ENCODE measurements at regions of chr9 and their contacts with region 1.

Region 1: GRCh38 chr9:104927912-104928740 is at the start of gene ABCA1:
- DNase-seq: peak; percentile 92
- H3K4me3 ChIP-seq: peak within 1 kb of the TSS; percentile 58 to 66
- H3K27ac ChIP-seq: peak within 1 kb of the TSS; percentile 66 to 68
- H3K4me1 ChIP-seq: no peaks in the 10 kb centered on the region
- H3K27me3 ChIP-seq: no peaks in the 10 kb centered on the region
- CTCF ChIP-seq: no peak
- POLR2A ChIP-seq: peak; percentile 80
- total RNA-seq, gene ABCA1: 11.0 to 63.7 TPM

Region 2: GRCh38 chr9:104836235-104836634 is 91.9 kb before region 1 on chr9:
- intact Hi-C with region 1: no loop called
- DNase-seq: no peak
- H3K4me3 ChIP-seq: no peak overlapping the region
- H3K27ac ChIP-seq: no peak overlapping the region
- H3K4me1 ChIP-seq: no peaks in the 10 kb centered on the region
- H3K27me3 ChIP-seq: no peaks in the 10 kb centered on the region
- CTCF ChIP-seq: no peak
- POLR2A ChIP-seq: no peak

Region 3: DNA sequence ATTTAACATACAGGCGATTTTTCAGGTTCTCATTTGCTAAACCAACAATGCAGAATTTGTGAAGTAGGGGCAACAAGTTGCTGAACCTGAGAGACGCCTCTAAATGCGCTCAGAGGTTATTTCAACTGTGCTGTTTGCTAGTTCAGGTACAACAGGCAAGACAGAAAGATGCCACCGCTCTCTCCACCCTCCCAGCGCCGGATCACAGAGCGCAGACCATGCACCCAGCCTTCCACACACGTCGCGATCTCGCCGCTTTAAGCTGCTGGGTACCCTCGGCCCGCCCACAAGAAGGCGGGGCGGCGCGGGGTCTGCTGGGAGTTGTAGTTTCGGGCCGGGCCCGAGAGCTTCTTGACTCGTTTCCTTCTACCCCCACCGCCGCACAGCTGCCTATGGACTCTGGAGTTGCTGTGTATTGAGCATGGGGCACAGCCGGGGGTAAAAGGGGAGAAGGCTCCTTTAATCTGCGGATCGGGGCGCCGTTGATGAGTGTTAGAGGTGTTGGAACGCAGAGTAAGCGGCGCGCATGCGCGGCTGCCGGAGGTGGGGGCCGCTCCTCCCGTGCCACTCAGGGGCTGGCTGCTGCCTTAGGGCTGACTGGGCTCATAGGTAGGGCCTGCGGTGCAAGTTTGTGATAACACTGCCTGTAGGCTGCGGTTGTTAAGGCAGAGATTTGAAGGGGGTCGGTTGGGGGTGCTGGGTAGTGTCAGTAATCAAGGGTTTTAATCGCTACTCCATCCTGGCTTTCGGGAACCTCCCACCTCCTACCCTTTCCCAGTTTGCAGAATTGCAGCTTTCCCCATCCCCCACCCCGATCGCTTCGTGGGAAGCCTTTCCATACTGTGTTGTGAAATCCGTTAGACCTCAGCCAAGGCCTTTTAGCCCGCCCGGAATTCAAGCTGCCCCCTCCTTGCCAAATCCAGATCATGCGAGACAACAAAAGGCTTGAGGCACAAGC is 40.2 kb after region 1 on chr9:
- intact Hi-C with region 1: loop called (anchors 1 kb)
- DNase-seq: peak; percentile 80
- H3K4me3 ChIP-seq: peak overlapping the region; percentile 45 to 51
- H3K27ac ChIP-seq: peak overlapping the region; percentile 76 to 81
- H3K4me1 ChIP-seq: no peaks in the 10 kb centered on the region
- H3K27me3 ChIP-seq: no peaks in the 10 kb centered on the region
- CTCF ChIP-seq: peak in 1 of 4 experiments; percentile 1
- POLR2A ChIP-seq: no peak

Region 4: GRCh38 chr9:105064315-105065097 is 136.4 kb after region 1 on chr9:
- intact Hi-C with region 1: loop called (anchors 10 kb)
- DNase-seq: peak; percentile 91
- H3K4me3 ChIP-seq: no peak overlapping the region
- H3K27ac ChIP-seq: peak overlapping the region; percentile 50 to 70
- H3K4me1 ChIP-seq: no peaks in the 10 kb centered on the region
- H3K27me3 ChIP-seq: no peaks in the 10 kb centered on the region
- CTCF ChIP-seq: peak in 1 of 4 experiments; percentile 16
- POLR2A ChIP-seq: peak; percentile 9

Region 5: GRCh38 chr9:105244003-105244733 is 316.0 kb after region 1 on chr9 and contains the start of gene SLC44A1:
- intact Hi-C with region 1: loop called (anchors 5 kb)
- DNase-seq: peak; percentile 96
- H3K4me3 ChIP-seq: peak within 1 kb of the TSS; percentile 60 to 81
- H3K27ac ChIP-seq: peak within 1 kb of the TSS; percentile 85 to 88
- H3K4me1 ChIP-seq: no peaks in the 10 kb centered on the region
- H3K27me3 ChIP-seq: no peaks in the 10 kb centered on the region
- CTCF ChIP-seq: peak in 2 of 4 experiments; percentile 29 to 34
- POLR2A ChIP-seq: peak; percentile 67
- total RNA-seq, gene SLC44A1: 22.2 to 27.1 TPM